ENCODE measurements at regions of chr16 and their contacts with region 1.

Region 1: GRCh38 chr16:2777231-2777902 is at the start of gene ELOB:
- DNase-seq: peak; percentile 92
- ATAC-seq: peak; percentile 95
- H3K4me3 ChIP-seq: peak within 1 kb of the TSS; percentile 53 to 97 (median 93)
- H3K4me3 Mint-ChIP-seq: peak within 1 kb of the TSS; percentile 96
- H3K27ac ChIP-seq: peak within 1 kb of the TSS; percentile 98 to 99
- H3K27ac Mint-ChIP-seq: peak within 1 kb of the TSS; percentile 98
- H3K4me1 ChIP-seq: peaks cover 17 to 29% of the 10 kb centered on the region in 2 donors
- H3K4me1 Mint-ChIP-seq: peaks cover 27% of the 10 kb centered on the region
- H3K27me3 ChIP-seq: no peaks in the 10 kb centered on the region
- H3K27me3 Mint-ChIP-seq: no peaks in the 10 kb centered on the region
- CTCF ChIP-seq: no peak
- total RNA-seq, gene ELOB: 84.4 and 93.1 TPM in 2 replicates

Region 2: DNA sequence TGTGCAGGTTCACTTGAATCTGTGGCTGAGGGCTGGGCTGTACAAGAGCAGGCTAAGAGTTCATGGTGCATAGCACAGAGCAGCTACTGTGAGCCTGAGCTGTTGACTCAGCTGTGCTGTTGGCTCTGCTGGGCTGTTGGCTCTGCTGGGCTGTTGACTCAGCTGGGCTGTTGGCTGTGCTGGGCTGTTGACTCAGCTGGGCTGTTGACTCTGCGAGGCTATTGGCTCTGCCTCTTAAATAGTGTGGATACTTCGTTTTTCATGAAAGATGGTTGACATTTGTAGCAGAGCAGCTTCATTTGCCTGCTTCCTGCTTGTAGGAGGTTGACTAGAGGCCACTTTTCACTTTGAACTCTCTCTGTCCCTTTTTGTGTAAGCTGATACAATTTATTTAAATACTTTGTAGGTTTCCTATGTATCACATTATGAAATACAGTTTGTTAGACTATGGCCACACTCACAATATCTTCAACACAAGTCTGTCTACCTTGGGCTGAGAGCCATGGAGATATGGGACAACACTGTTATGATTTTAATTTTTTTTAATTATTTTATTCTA is 388.4 kb before region 1 on chr16:
- CTCF ChIA-PET with region 1: no interaction called
- POLR2A ChIA-PET with region 1: no interaction called
- intact Hi-C with region 1: no loop called
- DNase-seq: no peak
- ATAC-seq: no peak
- H3K4me3 ChIP-seq: no peak overlapping the region
- H3K4me3 Mint-ChIP-seq: no peak overlapping the region
- H3K27ac ChIP-seq: no peak overlapping the region
- H3K27ac Mint-ChIP-seq: no peak overlapping the region
- H3K4me1 ChIP-seq: no peaks in the 10 kb centered on the region
- H3K4me1 Mint-ChIP-seq: no peaks in the 10 kb centered on the region
- H3K27me3 ChIP-seq: peaks cover 0 to 5% (median 2%) of the 10 kb centered on the region in 4 experiments
- H3K27me3 Mint-ChIP-seq: peaks cover 19% of the 10 kb centered on the region
- CTCF ChIP-seq: no peak

Region 3: GRCh38 chr16:2682209-2683021 is 95.0 kb before region 1 on chr16 and contains the start of gene KCTD5:
- CTCF ChIA-PET with region 1: no interaction called
- POLR2A ChIA-PET with region 1: interaction called, 5 read pairs
- intact Hi-C with region 1: loop called (anchors 10 kb)
- DNase-seq: peak; percentile 97
- ATAC-seq: peak; percentile 86
- H3K4me3 ChIP-seq: peak within 1 kb of the TSS; percentile 81 to 99 (median 96)
- H3K4me3 Mint-ChIP-seq: peak within 1 kb of the TSS; percentile 99
- H3K27ac ChIP-seq: peak within 1 kb of the TSS; percentile 71 to 79
- H3K27ac Mint-ChIP-seq: peak within 1 kb of the TSS; percentile 97
- H3K4me1 ChIP-seq: peaks cover 15 to 27% of the 10 kb centered on the region in 2 donors
- H3K4me1 Mint-ChIP-seq: peaks cover 21% of the 10 kb centered on the region
- H3K27me3 ChIP-seq: no peaks in the 10 kb centered on the region
- H3K27me3 Mint-ChIP-seq: no peaks in the 10 kb centered on the region
- CTCF ChIP-seq: no peak
- total RNA-seq, gene KCTD5: 35.1 and 37.3 TPM in 2 replicates

Region 4: GRCh38 chr16:2752035-2752849 is 25.1 kb before region 1 on chr16 and contains the start of gene SRRM2:
- CTCF ChIA-PET with region 1: no interaction called
- POLR2A ChIA-PET with region 1: interaction called, 31 read pairs
- intact Hi-C with region 1: loop called (anchors 1 kb)
- DNase-seq: peak; percentile 100
- ATAC-seq: peak; percentile 83
- H3K4me3 ChIP-seq: peak within 1 kb of the TSS; percentile 68 to 97 (median 82)
- H3K4me3 Mint-ChIP-seq: peak within 1 kb of the TSS; percentile 95
- H3K27ac ChIP-seq: peak within 1 kb of the TSS; percentile 95 to 98
- H3K27ac Mint-ChIP-seq: peak within 1 kb of the TSS; percentile 99
- H3K4me1 ChIP-seq: peaks cover 36 to 45% of the 10 kb centered on the region in 2 donors
- H3K4me1 Mint-ChIP-seq: peaks cover 50% of the 10 kb centered on the region
- H3K27me3 ChIP-seq: no peaks in the 10 kb centered on the region
- H3K27me3 Mint-ChIP-seq: no peaks in the 10 kb centered on the region
- CTCF ChIP-seq: no peak
- total RNA-seq, gene SRRM2: 1,470 and 1,485 TPM in 2 replicates

Region 5: GRCh38 chr16:2764718-2765117 is 12.6 kb before region 1 on chr16:
- CTCF ChIA-PET with region 1: no interaction called
- POLR2A ChIA-PET with region 1: no interaction called
- intact Hi-C with region 1: no loop called
- DNase-seq: peak; percentile 19
- ATAC-seq: no peak
- H3K4me3 ChIP-seq: no peak overlapping the region
- H3K4me3 Mint-ChIP-seq: no peak overlapping the region
- H3K27ac ChIP-seq: no peak overlapping the region
- H3K27ac Mint-ChIP-seq: no peak overlapping the region
- H3K4me1 ChIP-seq: no peaks in the 10 kb centered on the region
- H3K4me1 Mint-ChIP-seq: peaks cover 2% of the 10 kb centered on the region
- H3K27me3 ChIP-seq: no peaks in the 10 kb centered on the region
- H3K27me3 Mint-ChIP-seq: no peaks in the 10 kb centered on the region
- CTCF ChIP-seq: no peak

Region 6: DNA sequence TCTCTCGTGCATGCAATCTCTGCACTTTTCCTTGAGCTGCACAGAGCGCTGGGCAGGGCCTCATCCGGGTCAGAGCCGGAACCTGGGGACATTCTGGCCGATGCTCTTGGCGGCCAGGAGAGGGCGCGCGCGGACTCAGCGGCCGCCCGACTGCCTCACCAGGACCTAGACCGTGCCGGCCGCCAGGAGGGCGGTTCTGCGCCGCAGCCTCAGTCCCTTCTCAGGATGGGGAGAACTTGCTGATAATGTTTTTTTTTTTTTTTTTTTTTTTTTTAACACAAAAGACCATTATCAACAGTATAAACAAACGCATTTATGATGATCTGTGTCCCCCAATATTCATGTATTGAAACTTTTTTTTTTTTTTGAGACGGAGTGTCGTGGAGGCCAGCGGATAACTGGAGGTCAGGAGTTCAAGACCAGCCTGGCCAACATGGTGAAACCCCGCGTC is 97.6 kb after region 1 on chr16:
- CTCF ChIA-PET with region 1: interaction called, 6 read pairs
- POLR2A ChIA-PET with region 1: interaction called, 12 read pairs
- intact Hi-C with region 1: no loop called
- DNase-seq: peak; percentile 86
- ATAC-seq: peak; percentile 100
- H3K4me3 ChIP-seq: no peak overlapping the region
- H3K4me3 Mint-ChIP-seq: no peak overlapping the region
- H3K27ac ChIP-seq: no peak overlapping the region
- H3K27ac Mint-ChIP-seq: peak overlapping the region; percentile 53
- H3K4me1 ChIP-seq: peaks cover 0 to 5% of the 10 kb centered on the region in 2 donors
- H3K4me1 Mint-ChIP-seq: peaks cover 2% of the 10 kb centered on the region
- H3K27me3 ChIP-seq: peaks cover 0 to 2% (median 0%) of the 10 kb centered on the region in 4 experiments
- H3K27me3 Mint-ChIP-seq: peaks cover 13% of the 10 kb centered on the region
- CTCF ChIP-seq: peak; percentile 94

Measured in B cell (primary cell).